ENCODE measurements at regions of chr22 and their contacts with region 1.

Region 1: GRCh38 chr22:39380999-39381755 is 18.4 kb upstream of the TAB1 start:
- DNase-seq: no peak
- ATAC-seq: no peak
- H3K4me3 ChIP-seq: no peak overlapping the region
- H3K27ac ChIP-seq: no peak overlapping the region
- H3K4me1 ChIP-seq: no peaks in the 10 kb centered on the region
- H3K27me3 ChIP-seq: no peaks in the 10 kb centered on the region
- CTCF ChIP-seq: no peak

Region 2: GRCh38 chr22:39416319-39416718 is 35.1 kb after region 1 on chr22:
- CTCF ChIA-PET with region 1: no interaction called
- POLR2A ChIA-PET with region 1: interaction called, 12 read pairs
- in situ Hi-C with region 1: no loop called
- intact Hi-C with region 1: no loop called
- DNase-seq: no peak
- ATAC-seq: no peak
- H3K4me3 ChIP-seq: no peak overlapping the region
- H3K27ac ChIP-seq: no peak overlapping the region
- H3K4me1 ChIP-seq: no peaks in the 10 kb centered on the region
- H3K27me3 ChIP-seq: no peaks in the 10 kb centered on the region
- CTCF ChIP-seq: no peak

Region 3: GRCh38 chr22:39467390-39467895 is 86.3 kb after region 1 on chr22:
- CTCF ChIA-PET with region 1: no interaction called
- POLR2A ChIA-PET with region 1: interaction called, 16 read pairs
- in situ Hi-C with region 1: no loop called
- intact Hi-C with region 1: no loop called
- DNase-seq: no peak
- ATAC-seq: no peak
- H3K4me3 ChIP-seq: 0 out of 4 replicates have a peak overlapping the region, but pooled peaks of 1 of the 2 experiments have one; percentile 6
- H3K27ac ChIP-seq: no peak overlapping the region
- H3K4me1 ChIP-seq: peaks cover 8% of the 10 kb centered on the region; the same call in 1 of the 2 replicates
- H3K27me3 ChIP-seq: no peaks in the 10 kb centered on the region
- CTCF ChIP-seq: no peak

Region 4: DNA sequence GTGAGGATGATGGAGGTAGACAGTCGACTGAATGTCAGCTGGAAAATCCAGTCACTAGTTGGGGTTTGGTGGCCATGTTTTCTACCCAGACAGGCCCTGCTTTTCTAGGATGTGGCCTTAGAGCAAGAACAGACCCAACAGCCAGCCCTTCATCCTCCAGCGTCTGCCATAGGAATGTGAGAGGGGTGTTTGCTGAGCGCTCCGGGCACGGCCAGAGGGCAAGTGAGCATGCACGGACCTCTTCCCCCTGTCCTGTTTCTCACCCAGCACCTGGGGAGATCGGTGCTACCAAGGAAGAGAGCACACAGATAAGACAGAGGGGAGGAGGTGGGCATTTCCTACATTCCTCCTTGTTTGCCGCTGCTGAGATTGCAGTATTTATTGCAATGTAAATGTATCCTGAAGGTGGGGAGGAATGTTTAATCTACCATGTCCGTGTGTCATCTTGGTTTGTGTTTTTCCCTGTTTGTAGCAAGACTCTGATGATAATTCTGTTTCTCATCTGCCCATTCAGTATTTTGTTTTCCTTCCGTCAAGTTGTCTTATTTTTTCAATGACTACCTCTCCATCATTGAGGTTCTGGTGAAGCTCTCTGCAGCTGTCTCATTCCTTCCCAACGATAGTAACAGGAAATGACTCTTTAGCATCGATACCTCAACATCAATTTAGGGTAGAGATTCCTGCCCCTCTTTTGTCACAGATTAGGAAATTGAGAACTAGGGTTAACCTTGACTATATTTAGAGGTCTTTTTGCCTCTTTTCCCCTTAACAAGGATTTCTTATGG is 134.3 kb after region 1 on chr22:
- CTCF ChIA-PET with region 1: no interaction called
- POLR2A ChIA-PET with region 1: interaction called, 17 read pairs
- in situ Hi-C with region 1: no loop called
- intact Hi-C with region 1: no loop called
- DNase-seq: no peak
- ATAC-seq: no peak
- H3K4me3 ChIP-seq: no peak overlapping the region
- H3K27ac ChIP-seq: no peak overlapping the region
- H3K4me1 ChIP-seq: peaks cover 9% of the 10 kb centered on the region
- H3K27me3 ChIP-seq: no peaks in the 10 kb centered on the region
- CTCF ChIP-seq: no peak

Measured in Panc1 (cell line).